ENCODE measurements at regions of chr21 and their contacts with region 1.

Region 1: DNA sequence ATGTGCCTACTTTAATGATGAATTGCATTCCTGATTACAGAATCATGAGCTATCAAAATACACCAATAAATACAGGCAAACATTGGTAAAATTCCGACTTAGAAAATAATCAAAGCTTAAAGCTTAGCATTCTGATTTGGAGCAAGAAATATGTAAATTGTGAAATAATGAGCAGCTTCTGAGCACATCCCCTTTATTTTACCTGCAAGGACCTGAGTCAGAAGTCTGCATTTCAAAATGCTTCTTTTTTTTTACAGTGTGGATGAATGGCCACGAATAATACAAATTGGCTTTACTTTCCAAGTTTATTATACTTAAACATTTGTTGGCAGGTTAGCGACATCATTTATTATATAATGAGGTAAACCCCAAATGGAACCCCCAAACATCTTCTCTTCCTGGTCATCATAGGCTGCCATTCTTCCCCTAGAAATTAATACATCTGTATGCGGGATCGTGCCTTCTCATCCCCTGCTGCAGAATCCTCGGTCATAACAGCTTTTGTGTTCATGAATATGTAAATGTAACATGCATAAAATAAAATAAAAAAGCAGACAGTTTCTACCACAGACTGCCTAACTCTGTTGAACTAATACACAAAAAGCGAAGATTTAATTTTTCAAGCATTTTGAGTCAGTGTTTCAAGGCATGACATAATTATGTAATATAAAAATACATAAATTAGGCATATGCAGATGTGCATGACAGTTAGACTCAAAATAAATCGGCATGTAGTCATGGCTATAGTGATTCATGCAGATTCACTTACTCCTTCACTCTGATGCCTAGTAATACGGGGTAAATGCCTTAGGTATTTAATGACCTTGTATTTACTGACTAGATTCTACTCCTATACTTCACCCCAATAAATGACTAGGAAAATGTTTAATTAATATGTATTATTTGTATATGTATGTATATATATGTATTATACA is 339.7 kb downstream of the USP25 start:
- DNase-seq: no peak
- H3K4me3 ChIP-seq: no peak overlapping the region
- H3K27ac ChIP-seq: no peak overlapping the region
- H3K4me1 ChIP-seq: no peaks in the 10 kb centered on the region
- H3K27me3 ChIP-seq: no peaks in the 10 kb centered on the region
- CTCF ChIP-seq: no peak

Region 2: DNA sequence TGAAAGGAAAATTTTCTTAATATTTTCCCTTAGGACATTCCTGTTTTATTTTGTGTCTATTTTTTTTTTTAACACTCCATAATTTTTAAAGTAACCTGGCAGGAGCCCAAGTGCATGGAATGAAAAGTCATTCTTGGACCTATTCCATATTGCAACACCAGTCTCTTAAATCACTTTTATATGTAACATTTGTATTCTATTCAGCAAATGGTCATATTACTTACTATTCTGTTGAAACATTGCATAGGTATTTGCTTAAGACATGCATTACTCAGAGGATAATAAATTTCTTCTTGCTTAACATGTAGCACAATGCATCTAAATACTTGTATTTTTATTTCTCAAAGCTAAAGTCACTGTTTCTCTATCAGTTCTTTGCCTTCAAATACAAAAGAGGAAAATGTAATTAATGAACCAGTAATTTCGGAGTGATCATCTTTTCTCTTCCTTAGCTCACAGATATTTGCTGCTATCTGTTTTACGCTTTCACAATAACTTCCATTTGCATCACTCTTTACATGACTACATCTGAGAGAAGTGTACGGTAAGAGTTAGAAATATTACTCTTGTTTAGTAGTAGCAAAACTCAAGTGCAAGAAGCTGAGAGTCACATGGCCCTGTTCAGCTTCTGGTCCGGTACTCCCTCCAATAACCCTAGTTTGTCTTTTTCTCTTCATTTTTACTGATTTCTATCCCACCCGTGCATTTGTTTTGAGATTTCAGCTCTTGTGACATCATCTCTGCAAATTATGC is 55.1 kb after region 1 on chr21:
- intact Hi-C with region 1: loop called (anchors 10 kb)
- DNase-seq: no peak
- H3K4me3 ChIP-seq: peak overlapping the region; percentile 22
- H3K27ac ChIP-seq: peak overlapping the region; percentile 18
- H3K4me1 ChIP-seq: no peaks in the 10 kb centered on the region
- H3K27me3 ChIP-seq: no peaks in the 10 kb centered on the region
- CTCF ChIP-seq: no peak

Measured in left ventricle myocardium inferior (tissue), 1 donor.